Motor neuron (in vitro differentiated cells): ENCODE measurements at regions of chrX and their contacts with region 1.

Region 1: DNA sequence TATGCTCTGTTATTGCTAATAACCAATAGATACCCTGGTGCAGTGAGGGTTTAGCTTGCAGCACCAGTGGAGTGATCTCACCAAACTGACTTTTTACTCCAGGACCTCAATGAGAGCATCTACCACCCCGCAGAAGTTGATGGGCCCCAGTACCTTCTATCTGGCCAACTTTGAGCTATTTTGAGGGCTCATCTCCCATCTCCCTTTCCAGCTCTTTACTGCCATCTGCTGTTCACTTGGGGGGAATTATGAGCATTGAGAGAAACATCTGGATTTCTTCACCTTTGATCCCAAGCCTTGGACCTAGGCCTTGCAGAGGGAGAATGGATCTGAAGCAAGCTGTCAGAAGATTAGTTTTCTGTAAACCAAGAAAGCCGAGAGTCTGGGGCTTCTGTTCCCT is 143.6 kb downstream of the TMEM164 start:
- ATAC-seq: peak in 4 of 8 experiments; percentile 32 to 68 (median 61)
- H3K4me3 ChIP-seq: no peak overlapping the region
- H3K27ac ChIP-seq: no peak overlapping the region
- H3K4me1 ChIP-seq: peaks cover 6 to 17% of the 10 kb centered on the region in 2 donors

Region 2: DNA sequence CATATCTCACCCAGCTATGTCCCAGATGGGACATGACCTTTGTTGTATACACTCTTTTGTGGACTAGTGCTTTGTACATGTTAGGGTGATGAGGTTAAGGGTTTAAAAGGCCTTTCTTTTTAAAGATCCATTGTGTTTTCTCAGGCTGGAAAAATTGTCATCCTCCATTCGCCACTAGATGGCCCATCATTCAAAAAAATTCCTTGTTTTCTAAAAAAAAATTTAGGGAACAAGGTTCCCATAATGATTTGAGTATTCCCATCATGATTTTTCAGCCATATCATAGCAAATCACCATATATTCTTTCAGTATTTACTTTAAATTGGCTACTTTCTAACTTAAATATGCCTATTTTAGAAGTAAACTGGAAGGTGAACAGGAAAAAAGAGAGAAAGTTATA is 235.5 kb before region 1 on chrX:
- in situ Hi-C with region 1: loop called in 4 of 9 experiments (anchors 25 kb)
- ATAC-seq: no peak
- H3K4me3 ChIP-seq: no peak overlapping the region
- H3K27ac ChIP-seq: no peak overlapping the region
- H3K4me1 ChIP-seq: no peaks in the 10 kb centered on the region

Region 3: GRCh38 chrX:110026099-110026844 is 120.2 kb before region 1 on chrX:
- in situ Hi-C with region 1: loop called in 1 of 9 experiments (anchors 25 kb)
- ATAC-seq: peak in 3 of 8 experiments; percentile 65 to 95 (median 91)
- H3K4me3 ChIP-seq: no peak overlapping the region
- H3K27ac ChIP-seq: no peak overlapping the region
- H3K4me1 ChIP-seq: no peaks in the 10 kb centered on the region